Activated B cell treated with CpG ODN at 0.5 μM for 24 hours (primary cell): ENCODE measurements at regions of chr12 and their contacts with region 1.

Region 1: DNA sequence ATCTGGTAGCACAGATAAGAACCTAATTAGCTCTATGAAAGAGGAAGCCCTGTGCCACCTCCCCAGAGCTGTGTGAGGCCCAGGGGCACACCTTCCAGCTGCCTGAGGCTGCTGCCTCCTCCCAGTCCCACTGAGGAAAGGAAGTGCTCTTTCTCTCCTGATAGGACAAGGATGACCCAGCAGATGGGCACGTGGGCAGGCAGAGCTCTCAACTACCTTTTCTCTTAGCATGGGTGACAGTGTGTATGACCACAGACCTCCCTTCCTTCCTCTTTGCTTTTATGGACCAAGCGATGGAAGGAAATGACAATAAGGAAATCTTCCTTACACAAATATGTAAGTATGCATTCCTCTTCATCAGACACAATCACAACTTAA is 127.6 kb upstream of the AMIGO2 start:
- DNase-seq: peak; percentile 51
- ATAC-seq: peak; percentile 86
- H3K4me3 Mint-ChIP-seq: peak overlapping the region; percentile 68
- H3K27ac Mint-ChIP-seq: peak overlapping the region; percentile 95
- H3K4me1 Mint-ChIP-seq: peaks cover 83% of the 10 kb centered on the region
- H3K27me3 Mint-ChIP-seq: no peaks in the 10 kb centered on the region
- CTCF ChIP-seq: no peak

Region 2: DNA sequence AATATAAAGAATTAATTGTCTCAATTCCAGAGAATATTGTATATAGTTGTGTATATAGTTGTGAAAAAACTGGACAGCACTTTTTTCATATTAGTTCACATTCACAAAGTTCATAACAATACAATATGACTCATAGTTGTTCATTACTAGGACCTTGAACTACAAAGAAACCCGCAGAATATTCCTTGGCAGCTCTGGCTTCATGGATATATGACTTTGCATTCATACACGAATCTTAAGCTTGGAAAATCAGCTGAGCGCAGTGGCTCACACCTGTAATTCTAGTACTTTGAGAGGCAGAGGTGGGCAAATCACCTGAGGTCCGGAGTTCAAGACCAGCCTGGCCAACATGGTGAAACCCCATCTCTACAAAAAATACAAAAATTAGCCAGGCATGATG is 166.0 kb before region 1 on chr12:
- CTCF ChIA-PET with region 1: no interaction called
- POLR2A ChIA-PET with region 1: no interaction called
- intact Hi-C with region 1: no loop called
- DNase-seq: no peak
- ATAC-seq: no peak
- H3K4me3 Mint-ChIP-seq: no peak overlapping the region
- H3K27ac Mint-ChIP-seq: no peak overlapping the region
- H3K4me1 Mint-ChIP-seq: peaks cover 5% of the 10 kb centered on the region
- H3K27me3 Mint-ChIP-seq: no peaks in the 10 kb centered on the region
- CTCF ChIP-seq: no peak

Region 3: DNA sequence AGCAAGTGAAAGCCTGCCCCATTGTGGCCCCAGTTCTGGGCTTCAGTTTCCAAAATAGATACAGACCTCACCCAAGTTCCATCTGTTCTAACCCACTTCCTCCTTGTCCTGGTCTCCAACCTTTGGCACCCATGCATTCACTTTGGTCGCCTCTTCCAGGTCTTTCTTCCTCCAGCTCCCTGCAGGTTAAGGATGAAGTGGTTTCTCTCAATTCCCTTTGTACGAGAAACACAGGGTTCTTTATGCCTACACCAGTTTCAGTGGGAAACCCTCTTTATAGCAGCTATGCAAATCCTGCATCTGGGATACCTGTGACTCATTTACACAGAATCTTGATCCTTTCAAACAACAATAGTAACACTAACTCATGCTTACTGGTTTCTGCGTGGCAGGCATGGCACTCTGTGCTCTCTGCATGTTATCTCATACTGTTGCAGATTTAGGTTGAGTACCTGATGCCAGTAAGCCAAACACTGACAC is 17.0 kb before region 1 on chr12:
- CTCF ChIA-PET with region 1: interaction called, 8 read pairs
- POLR2A ChIA-PET with region 1: interaction called, 15 read pairs
- intact Hi-C with region 1: loop called (anchors 1 kb)
- DNase-seq: no peak
- ATAC-seq: peak; percentile 25
- H3K4me3 Mint-ChIP-seq: peak overlapping the region; percentile 45
- H3K27ac Mint-ChIP-seq: peak overlapping the region; percentile 86
- H3K4me1 Mint-ChIP-seq: peaks cover 75% of the 10 kb centered on the region
- H3K27me3 Mint-ChIP-seq: no peaks in the 10 kb centered on the region
- CTCF ChIP-seq: no peak

Region 4: DNA sequence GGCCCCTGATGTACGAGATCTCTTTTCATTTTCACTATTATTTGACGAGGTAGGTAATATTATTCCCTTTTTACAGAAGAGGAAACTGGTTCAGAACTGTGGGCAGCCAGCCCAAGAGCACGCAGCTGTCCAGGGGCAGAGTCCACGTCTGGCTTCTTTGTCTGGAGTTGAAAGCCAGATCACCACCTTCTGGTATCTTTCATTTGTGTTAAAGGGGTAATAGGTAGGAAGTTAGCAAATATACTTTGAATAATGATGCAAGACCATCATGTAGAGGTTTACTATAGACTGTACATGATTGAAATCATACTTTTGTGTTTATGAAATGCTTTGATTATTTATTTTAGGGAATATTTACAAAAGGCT is 16.5 kb after region 1 on chr12:
- CTCF ChIA-PET with region 1: interaction called, 5 read pairs
- POLR2A ChIA-PET with region 1: interaction called, 102 read pairs
- intact Hi-C with region 1: loop called (anchors 2 kb)
- DNase-seq: no peak
- ATAC-seq: peak; percentile 33
- H3K4me3 Mint-ChIP-seq: peak overlapping the region; percentile 74
- H3K27ac Mint-ChIP-seq: peak overlapping the region; percentile 88
- H3K4me1 Mint-ChIP-seq: peaks cover 85% of the 10 kb centered on the region
- H3K27me3 Mint-ChIP-seq: no peaks in the 10 kb centered on the region
- CTCF ChIP-seq: no peak